PC-9 (cell line): ENCODE measurements at regions of chr7 and their contacts with region 1.

Region 1: DNA sequence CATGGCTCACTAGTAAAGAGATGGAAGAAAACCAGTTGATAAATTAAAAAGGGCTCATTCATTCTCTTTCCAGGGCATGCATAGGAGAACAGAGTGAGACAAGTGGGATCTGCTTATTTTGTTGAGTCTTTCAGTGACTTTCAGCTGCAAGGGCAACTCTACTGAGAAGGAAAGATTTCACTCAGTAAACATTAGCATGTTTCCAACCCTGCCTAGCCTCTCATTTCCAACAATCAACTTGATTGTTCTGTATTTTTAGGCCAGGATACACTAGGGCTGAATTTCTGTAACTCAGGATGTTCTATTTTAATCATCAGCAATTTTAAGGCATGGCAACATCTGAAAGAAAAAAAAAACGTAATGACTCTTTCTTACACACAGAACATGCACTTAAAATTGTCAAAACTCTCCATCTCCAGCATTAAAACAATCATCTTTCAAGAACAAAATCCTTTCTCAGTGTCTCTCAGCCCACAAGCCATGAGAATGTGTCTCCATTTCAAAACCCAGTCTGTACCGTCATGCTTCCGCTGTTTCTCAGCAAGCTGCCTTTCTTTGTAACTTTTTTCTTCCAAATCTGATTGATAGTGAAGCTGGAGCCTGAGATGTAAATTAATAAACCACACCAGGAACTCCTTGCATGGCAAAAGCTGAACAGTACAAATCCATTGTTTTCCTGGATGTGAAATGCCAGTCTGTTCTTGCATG is 147.2 kb upstream of the KLF14 start:
- DNase-seq: no peak
- H3K4me3 ChIP-seq: no peak overlapping the region
- H3K27ac ChIP-seq: peak overlapping the region; percentile 10; the same call in 1 of the 2 replicates
- H3K4me1 ChIP-seq: peaks cover 28% of the 10 kb centered on the region
- H3K27me3 ChIP-seq: no peaks in the 10 kb centered on the region
- CTCF ChIP-seq: no peak

Region 2: GRCh38 chr7:131002600-131002999 is 121.4 kb after region 1 on chr7:
- CTCF ChIA-PET with region 1: no interaction called
- POLR2A ChIA-PET with region 1: interaction called, 11 read pairs
- intact Hi-C with region 1: no loop called
- DNase-seq: no peak
- H3K4me3 ChIP-seq: no peak overlapping the region
- H3K27ac ChIP-seq: no peak overlapping the region
- H3K4me1 ChIP-seq: peaks cover 58% of the 10 kb centered on the region
- H3K27me3 ChIP-seq: no peaks in the 10 kb centered on the region
- CTCF ChIP-seq: no peak

Region 3: GRCh38 chr7:131249003-131249402 is 367.8 kb after region 1 on chr7:
- CTCF ChIA-PET with region 1: no interaction called
- POLR2A ChIA-PET with region 1: no interaction called
- intact Hi-C with region 1: no loop called
- DNase-seq: peak; percentile 64 to 91
- H3K4me3 ChIP-seq: no peak overlapping the region
- H3K27ac ChIP-seq: 0 out of 2 replicates have a peak overlapping the region, but pooled peaks have one; percentile 8
- H3K4me1 ChIP-seq: peaks cover 15% of the 10 kb centered on the region
- H3K27me3 ChIP-seq: no peaks in the 10 kb centered on the region
- CTCF ChIP-seq: no peak